CD14-positive monocyte (primary cell): ENCODE measurements at regions of chrX and their contacts with region 1.

Region 1: DNA sequence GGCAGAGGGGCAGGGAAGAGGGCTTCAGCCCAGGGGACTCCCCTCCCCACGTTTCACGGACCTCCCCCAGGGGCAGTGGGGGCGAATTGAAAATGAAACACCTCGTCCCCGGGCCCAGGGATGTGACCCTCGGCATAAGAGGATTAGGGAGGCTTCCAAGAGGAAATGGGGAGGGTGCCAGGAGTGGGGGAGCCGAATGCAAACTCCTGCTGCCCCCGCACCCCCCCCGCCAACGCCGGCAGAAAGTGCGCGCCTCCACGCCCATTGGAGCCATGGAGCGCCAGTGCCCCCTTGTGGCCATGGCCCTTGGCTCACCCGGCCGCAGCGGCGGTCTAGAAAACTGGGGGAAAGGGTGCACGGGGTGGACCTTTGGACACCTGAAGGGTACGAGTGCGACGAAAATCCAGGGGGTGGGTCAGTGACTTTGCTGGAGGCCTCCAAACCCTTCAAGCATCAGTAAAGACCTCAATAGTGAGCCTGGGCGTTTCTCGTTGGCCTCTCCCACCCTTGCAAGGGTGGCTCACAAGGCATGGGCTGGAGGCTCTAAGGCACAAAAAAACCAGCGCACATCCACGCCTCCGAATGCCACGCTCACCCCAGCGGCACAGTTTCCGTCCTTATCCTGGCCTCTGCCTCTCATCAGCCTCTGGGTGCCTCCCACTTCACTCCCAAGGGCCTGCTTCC is 120.8 kb upstream of the PJA1 start:
- DNase-seq: peak; percentile 7 to 19 (median 11)
- H3K4me3 ChIP-seq: peak overlapping the region in 2 of 3 experiments; percentile 24 to 57
- H3K4me3 Mint-ChIP-seq: peak overlapping the region; percentile 54 to 71
- H3K27ac ChIP-seq: no peak overlapping the region
- H3K27ac Mint-ChIP-seq: no peak overlapping the region
- H3K4me1 ChIP-seq: peaks cover 2 to 7% of the 10 kb centered on the region in 2 donors
- H3K4me1 Mint-ChIP-seq: peaks cover 2% of the 10 kb centered on the region
- H3K27me3 ChIP-seq: no peaks in the 10 kb centered on the region
- H3K27me3 Mint-ChIP-seq: peaks cover 0 to 28% (median 0%) of the 10 kb centered on the region in 3 donors
- CTCF ChIP-seq: peak; percentile 75

Region 2: GRCh38 chrX:68732906-68733493 is 553.0 kb before region 1 on chrX:
- intact Hi-C with region 1: loop called (anchors 2 to 5 kb)
- DNase-seq: peak; percentile 45 to 60 (median 53)
- H3K4me3 ChIP-seq: no peak overlapping the region
- H3K4me3 Mint-ChIP-seq: no peak overlapping the region
- H3K27ac ChIP-seq: no peak overlapping the region
- H3K27ac Mint-ChIP-seq: no peak overlapping the region
- H3K4me1 ChIP-seq: no peaks in the 10 kb centered on the region
- H3K4me1 Mint-ChIP-seq: no peaks in the 10 kb centered on the region
- H3K27me3 ChIP-seq: peaks cover 0 to 2% of the 10 kb centered on the region in 2 donors
- H3K27me3 Mint-ChIP-seq: peaks cover 0 to 16% (median 6%) of the 10 kb centered on the region in 3 donors
- CTCF ChIP-seq: peak; percentile 67

Region 3: DNA sequence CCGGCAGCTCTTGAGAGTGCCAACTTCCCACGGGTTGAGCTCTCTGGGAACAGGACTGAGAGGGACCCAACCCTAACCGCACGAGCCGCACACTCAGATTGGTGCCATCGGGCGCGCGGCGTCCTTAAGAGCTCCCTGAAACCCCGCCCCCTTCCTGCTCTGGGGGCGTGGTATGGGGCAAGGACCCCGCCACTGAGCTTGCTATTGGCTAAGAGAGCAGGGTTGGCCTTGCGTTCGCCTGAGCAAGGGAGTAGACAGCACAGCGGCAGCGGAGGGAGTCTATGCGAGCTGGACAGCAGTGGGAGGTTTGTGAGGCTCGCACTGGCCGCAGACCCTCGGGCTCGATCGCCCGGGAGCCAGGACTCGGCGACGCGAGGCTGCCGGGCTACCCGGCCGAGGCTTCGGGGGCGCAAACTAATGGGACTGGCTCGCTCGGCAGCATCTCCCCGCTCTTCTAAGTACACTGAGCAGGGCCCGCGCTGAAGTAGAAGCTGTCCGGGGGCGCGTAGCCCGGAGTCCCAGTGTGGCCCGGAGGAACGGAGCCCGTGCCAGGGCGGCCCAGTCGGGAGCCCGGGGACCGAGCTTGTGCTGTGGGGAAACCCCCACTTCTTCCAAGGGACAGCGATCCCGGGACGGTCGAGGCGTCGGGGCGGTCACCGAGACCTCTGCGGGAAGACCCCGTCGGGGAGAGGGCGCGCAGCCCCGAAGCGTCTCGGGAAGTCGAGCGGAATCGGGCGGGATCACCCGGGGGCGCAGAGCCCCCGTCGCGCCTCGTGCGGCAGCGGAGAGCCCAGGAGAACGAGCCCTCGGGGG is 457.1 kb before region 1 on chrX and contains the start of gene EFNB1:
- intact Hi-C with region 1: loop called (anchors 5 to 10 kb)
- DNase-seq: peak; percentile 89 to 90 (median 89)
- H3K4me3 ChIP-seq: peak within 1 kb of the TSS; percentile 57 to 84 (median 81)
- H3K4me3 Mint-ChIP-seq: peak within 1 kb of the TSS; percentile 84 to 94
- H3K27ac ChIP-seq: peak within 1 kb of the TSS in 1 of 2 donors; percentile 20
- H3K27ac Mint-ChIP-seq: peak within 1 kb of the TSS in 6 of 7 donors; percentile 2 to 84 (median 70)
- H3K4me1 ChIP-seq: peaks cover 23 to 47% of the 10 kb centered on the region in 2 donors
- H3K4me1 Mint-ChIP-seq: peaks cover 37% of the 10 kb centered on the region
- H3K27me3 ChIP-seq: peaks cover 0 to 23% of the 10 kb centered on the region in 2 donors
- H3K27me3 Mint-ChIP-seq: peaks cover 21 to 35% (median 27%) of the 10 kb centered on the region in 3 donors
- CTCF ChIP-seq: no peak
- polyA plus RNA-seq, gene EFNB1: 4.7 to 6.6 (median 5.4) TPM

Region 4: DNA sequence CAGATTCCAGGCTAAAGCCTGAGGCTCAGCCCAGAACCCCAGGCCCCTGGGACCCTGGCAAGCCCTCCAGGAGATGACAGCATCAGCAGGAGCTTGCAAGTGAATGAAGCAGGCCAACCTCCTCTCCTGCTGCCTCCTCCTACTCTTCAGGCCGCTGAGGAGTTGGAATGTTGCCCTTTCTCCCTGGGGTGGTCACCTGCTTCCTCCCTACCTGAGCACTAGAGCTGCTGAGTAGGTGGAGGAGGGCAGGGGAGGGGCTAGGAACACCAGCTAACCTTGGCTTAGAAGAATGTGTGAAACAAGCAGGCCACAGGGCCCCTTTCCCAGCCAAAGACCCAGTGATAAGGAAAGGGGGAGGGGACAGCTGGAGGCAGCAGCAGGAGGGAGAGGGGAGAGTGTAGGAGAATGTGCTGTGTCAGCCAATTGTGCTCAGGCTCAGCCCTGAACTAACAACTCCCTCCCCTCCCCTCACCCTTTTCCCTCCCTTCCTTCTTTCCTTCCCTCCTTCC is 178.7 kb before region 1 on chrX:
- intact Hi-C with region 1: no loop called
- DNase-seq: no peak
- H3K4me3 ChIP-seq: no peak overlapping the region
- H3K4me3 Mint-ChIP-seq: no peak overlapping the region
- H3K27ac ChIP-seq: no peak overlapping the region
- H3K27ac Mint-ChIP-seq: no peak overlapping the region
- H3K4me1 ChIP-seq: no peaks in the 10 kb centered on the region
- H3K4me1 Mint-ChIP-seq: no peaks in the 10 kb centered on the region
- H3K27me3 ChIP-seq: no peaks in the 10 kb centered on the region
- H3K27me3 Mint-ChIP-seq: peaks cover 0 to 6% (median 4%) of the 10 kb centered on the region in 3 donors
- CTCF ChIP-seq: no peak

Region 5: DNA sequence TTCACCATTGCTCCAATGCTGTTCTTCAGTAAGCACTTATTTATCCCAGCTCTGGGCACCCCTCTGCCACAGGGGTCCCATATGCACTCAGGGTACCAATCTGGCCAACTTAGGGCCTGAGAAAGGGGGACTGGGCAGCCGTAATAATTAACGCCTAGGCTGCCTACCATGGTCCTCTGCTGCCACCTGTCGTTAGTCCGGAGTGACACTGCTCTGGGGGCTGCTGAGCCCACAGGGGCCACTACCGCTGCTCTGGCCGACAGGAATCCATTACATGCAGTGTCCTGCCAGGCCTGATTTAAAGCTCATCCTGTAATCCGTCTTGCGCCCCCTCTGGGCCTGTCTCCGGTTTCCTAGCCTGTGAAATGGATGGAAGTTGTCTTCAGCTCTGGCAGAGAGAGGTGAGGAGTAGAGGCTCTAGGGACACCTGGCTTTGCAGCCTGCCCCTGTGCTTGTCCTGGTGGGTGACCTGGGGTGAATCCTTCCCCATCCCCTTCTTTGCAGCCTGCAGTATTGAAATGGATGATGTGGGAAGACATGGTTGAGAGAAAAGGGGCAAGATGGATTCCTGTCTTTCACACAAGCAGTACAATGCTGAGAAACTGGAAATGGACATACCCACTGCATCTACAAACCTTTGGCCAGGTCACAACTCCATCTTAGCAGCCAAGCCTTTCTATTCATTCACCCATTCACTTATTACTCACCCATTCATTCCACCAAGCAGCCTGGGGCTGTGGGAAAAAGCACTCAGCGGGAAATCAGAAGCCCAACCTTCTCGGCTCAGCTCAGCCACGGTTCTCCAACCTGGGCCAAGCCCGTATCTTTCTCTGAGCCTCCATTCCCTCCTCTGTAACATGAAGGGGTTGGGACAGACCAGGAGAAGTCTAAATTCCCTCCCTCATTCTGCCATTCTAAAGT is 101.8 kb after region 1 on chrX:
- intact Hi-C with region 1: no loop called
- DNase-seq: peak in 2 of 3 donors; percentile 0 to 3
- H3K4me3 ChIP-seq: no peak overlapping the region
- H3K4me3 Mint-ChIP-seq: peak overlapping the region in 1 of 2 donors; percentile 24
- H3K27ac ChIP-seq: no peak overlapping the region
- H3K27ac Mint-ChIP-seq: no peak overlapping the region
- H3K4me1 ChIP-seq: no peaks in the 10 kb centered on the region
- H3K4me1 Mint-ChIP-seq: no peaks in the 10 kb centered on the region
- H3K27me3 ChIP-seq: no peaks in the 10 kb centered on the region
- H3K27me3 Mint-ChIP-seq: peaks cover 1 to 11% (median 2%) of the 10 kb centered on the region in 3 donors
- CTCF ChIP-seq: peak; percentile 49

Region 6: DNA sequence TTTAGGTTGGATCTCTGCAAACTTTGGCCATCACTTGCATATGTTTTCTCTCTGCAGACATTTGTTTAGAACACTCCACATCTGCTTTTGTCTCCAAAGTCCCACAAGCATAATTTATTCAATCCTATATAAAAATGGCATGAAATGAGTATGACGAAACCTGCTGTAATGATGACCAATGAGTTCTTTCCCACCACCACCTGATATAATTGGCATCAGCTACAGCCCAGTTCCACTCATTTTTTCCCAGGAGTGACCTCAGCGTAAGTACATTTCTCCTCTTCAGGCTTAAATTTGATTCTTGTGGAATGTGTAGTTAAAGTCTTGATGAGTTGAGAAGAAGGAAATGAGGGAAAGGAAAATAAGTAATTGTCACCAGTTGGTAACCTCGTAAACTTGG is 558.6 kb after region 1 on chrX:
- intact Hi-C with region 1: no loop called
- DNase-seq: no peak
- H3K4me3 ChIP-seq: no peak overlapping the region
- H3K4me3 Mint-ChIP-seq: no peak overlapping the region
- H3K27ac ChIP-seq: no peak overlapping the region
- H3K27ac Mint-ChIP-seq: no peak overlapping the region
- H3K4me1 ChIP-seq: no peaks in the 10 kb centered on the region
- H3K4me1 Mint-ChIP-seq: no peaks in the 10 kb centered on the region
- H3K27me3 ChIP-seq: no peaks in the 10 kb centered on the region
- H3K27me3 Mint-ChIP-seq: no peaks in the 10 kb centered on the region
- CTCF ChIP-seq: no peak